Right ventricle myocardium inferior (tissue), 1 donor: ENCODE measurements at regions of chr2 and their contacts with region 1.

Region 1: GRCh38 chr2:235493775-235494715 is at the start of gene AGAP1:
- DNase-seq: peak; percentile 89
- ATAC-seq: peak; percentile 93
- total RNA-seq, gene AGAP1: 23.5 TPM

Region 2: DNA sequence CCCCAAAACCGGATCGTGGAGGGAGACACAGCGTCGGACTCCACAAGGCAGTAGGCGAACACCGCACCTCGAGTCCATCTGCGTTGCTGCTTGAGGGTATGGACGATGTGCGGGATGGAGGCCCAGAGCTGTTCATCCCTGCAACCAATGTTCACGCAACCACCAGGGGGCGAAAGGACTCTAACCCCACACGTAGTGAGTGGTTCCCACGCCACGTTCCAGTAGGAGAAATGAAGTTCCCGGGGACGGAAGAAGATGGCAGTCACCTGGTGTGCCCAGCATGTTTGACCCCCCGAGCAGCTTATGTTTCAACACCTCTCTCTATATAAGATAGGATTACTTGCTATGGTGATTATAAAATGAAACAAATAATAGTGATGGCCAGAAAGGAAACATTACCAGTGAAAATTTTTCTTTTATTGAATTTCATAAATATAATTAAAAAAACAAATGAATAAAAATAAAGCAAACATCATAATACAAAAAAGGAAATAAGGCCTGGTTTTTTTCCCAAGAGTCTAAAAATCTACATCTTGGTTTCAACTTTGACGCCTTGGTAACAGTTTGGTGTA is 358.0 kb before region 1 on chr2:
- intact Hi-C with region 1: loop called (anchors 10 kb)
- DNase-seq: peak; percentile 84
- ATAC-seq: peak; percentile 80

Region 3: GRCh38 chr2:235394278-235394828 is 99.7 kb before region 1 on chr2:
- intact Hi-C with region 1: no loop called
- DNase-seq: no peak
- ATAC-seq: no peak

Region 4: GRCh38 chr2:235416864-235417499 is 77.1 kb before region 1 on chr2:
- intact Hi-C with region 1: loop called (anchors 5 kb)
- DNase-seq: no peak
- ATAC-seq: peak; percentile 30

Region 5: GRCh38 chr2:235551965-235552364 is 57.9 kb after region 1 on chr2:
- intact Hi-C with region 1: loop called (anchors 5 kb)
- DNase-seq: no peak
- ATAC-seq: peak; percentile 71